ENCODE measurements at regions of chr2 and their contacts with region 1.

Region 1: DNA sequence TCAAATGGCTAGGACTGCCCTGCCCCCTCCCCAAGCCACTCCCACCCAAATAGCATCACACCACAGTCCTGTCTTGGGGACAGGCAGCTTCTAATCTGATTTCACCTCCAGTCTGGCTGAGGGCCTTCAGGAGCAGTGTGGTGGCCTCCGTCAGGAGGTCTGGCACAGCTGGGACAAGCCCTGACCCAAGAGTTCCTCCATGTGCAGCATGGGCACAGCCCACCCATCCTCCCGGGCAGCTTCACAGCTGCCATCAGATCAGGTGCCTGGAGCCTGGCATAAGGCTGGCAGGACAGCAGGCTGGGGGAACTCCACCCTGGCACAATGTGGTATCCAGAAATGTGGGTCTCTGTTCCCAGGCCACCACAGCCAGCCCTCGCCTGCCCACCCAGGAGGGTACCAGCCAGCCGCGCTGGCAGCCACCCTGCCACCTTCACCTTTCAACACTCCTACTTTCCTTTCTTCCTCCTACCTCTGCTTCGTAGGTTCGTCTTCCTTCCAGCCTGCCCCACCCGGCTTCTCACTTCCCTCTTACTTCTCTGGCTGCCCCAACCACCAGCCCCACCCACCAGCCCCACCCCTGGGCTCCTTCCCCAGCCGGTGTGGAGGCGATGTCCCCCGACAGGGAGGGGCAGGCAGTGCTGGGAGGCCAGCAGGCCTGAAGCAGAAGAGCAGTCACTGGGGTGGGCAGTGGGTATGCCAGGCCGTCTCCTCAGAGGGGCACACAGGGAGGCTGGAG is at the start of gene CAPG:
- DNase-seq: peak; percentile 63
- H3K4me3 ChIP-seq: peak within 1 kb of the TSS; percentile 6 to 39 (median 21)
- H3K27ac ChIP-seq: no peak within 1 kb of the TSS
- H3K4me1 ChIP-seq: peaks cover 25% of the 10 kb centered on the region
- H3K27me3 ChIP-seq: no peaks in the 10 kb centered on the region
- CTCF ChIP-seq: no peak
- total RNA-seq, gene CAPG: 140 to 186 TPM

Region 2: GRCh38 chr2:85524336-85524933 is 114.4 kb after region 1 on chr2:
- CTCF ChIA-PET with region 1: no interaction called
- dilution Hi-C with region 1: loop called (anchors 5 kb)
- in situ Hi-C with region 1: no loop called
- intact Hi-C with region 1: no loop called
- DNase-seq: no peak
- H3K4me3 ChIP-seq: no peak overlapping the region
- H3K27ac ChIP-seq: no peak overlapping the region
- H3K4me1 ChIP-seq: no peaks in the 10 kb centered on the region
- H3K27me3 ChIP-seq: no peaks in the 10 kb centered on the region
- CTCF ChIP-seq: no peak